Heart left ventricle (tissue), 16 donors: ENCODE measurements at regions of chr9 and their contacts with region 1.

Region 1: DNA sequence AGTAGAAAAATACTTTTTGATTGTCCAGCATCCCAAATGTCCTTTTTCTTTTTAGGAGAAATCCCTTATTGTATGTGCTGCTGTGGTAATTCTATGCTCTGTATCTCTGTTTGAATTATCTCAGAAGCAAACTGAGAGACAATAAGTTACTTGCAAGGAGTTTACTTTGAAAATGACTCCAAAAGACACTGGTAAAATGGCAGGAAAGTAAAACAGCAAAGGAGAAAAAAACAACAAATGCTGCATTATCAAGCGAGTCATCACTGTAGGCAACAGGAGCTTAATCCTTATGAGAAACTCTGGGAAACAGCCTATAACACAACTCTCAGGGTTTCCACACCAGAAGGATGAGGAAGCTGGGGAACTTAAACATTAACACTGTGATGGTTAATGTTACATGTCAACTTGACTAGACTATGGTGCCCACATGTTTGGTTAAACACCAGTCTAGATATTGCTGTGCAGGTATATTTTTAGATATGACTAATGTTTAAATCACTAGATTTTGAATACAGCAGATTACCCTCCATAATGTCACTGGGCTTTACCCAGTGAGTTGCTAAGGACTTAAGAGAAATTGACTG is 92.6 kb upstream of the GAS1 start:
- DNase-seq: no peak
- ATAC-seq: no peak
- H3K4me3 ChIP-seq: no peak overlapping the region
- H3K27ac ChIP-seq: no peak overlapping the region
- H3K4me1 ChIP-seq: peaks cover 0 to 5% (median 0%) of the 10 kb centered on the region in 12 donors
- H3K27me3 ChIP-seq: no peaks in the 10 kb centered on the region
- CTCF ChIP-seq: no peak
- POLR2A ChIP-seq: no peak

Region 2: GRCh38 chr9:87069690-87070089 is 29.8 kb after region 1 on chr9:
- intact Hi-C with region 1: loop called in 1 of 10 experiments (anchors 5 kb)
- DNase-seq: no peak
- ATAC-seq: no peak
- H3K4me3 ChIP-seq: no peak overlapping the region
- H3K27ac ChIP-seq: no peak overlapping the region
- H3K4me1 ChIP-seq: peaks cover 0 to 5% (median 0%) of the 10 kb centered on the region in 12 donors
- H3K27me3 ChIP-seq: no peaks in the 10 kb centered on the region
- CTCF ChIP-seq: no peak
- POLR2A ChIP-seq: no peak